Left cardiac atrium (tissue), 4 donors: ENCODE measurements at regions of chr13 and their contacts with region 1.

Region 1: GRCh38 chr13:49840266-49840665 is 47.8 kb upstream of the KPNA3 start:
- DNase-seq: no peak
- ATAC-seq: no peak

Region 2: DNA sequence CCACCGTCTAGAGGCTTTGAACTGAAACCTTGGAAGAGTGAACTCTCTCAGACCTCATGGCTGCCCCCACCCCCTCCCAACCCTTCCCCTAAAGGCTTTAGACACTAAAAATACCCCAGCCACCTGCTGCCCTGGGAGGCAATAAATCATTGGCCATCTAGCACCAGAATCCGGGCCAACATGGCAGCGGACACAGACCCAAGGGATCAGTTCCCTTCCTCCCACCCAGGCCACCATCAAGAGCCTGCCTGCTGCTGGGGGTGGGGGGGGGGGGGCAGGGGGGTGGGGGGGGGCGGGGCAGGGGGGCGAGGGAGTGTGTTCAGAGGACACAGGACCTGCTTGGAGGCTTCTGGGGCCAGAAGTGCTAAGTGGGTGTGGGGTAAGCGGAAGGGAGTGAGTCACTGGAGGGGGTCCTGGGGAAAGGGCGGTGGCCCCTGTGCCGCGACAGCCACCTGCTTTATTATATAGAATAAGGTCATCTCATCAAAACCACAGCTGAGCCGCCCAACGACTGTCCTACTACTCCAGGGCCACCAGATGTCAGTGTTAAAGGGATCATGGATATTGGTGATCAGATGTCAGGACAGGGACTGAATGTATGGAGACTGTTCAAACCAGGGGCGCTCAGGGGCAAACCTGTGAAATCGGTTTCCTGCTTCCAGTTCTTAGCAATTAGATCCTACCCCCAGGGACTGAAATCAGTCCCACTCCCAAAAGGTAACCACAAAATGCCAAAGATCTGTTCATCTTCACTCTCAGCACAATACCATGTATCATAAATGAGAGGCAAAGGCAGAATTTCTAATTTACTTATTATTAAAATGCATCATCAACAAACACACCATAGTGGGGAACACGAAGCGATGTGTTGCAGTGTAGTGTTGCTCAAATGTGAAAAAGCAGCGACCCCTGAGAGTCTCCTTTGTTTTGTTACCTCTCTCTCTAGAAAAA is 187.6 kb before region 1 on chr13:
- intact Hi-C with region 1: loop called (anchors 5 kb)
- DNase-seq: no peak
- ATAC-seq: peak in 1 of 2 donors; percentile 65

Region 3: DNA sequence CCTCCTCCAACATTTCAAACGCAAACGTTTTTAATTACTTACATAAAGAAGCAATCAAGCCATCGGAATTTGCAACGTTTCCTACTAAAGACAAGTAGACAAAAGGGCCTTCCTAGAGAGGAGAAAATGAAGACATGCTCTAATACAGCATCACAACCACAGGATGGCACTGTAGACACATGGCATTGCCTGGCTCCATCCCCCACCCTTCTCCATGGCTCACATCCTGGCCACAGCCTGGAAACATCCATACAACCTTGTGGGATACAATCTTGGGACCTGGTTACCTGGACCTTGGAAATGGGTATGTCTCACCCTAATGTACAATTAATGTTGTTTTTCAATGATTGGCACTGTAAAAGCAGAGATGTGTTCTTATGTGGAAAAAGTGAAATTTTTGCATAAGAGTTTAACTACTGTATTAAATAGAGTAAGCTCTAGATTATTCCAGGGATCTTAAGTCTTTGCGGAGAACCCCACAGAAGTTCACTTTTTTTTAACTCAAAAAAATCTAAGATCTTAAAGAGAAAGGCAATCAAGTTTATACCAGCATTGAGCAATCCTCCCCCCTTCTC is 170.4 kb before region 1 on chr13:
- intact Hi-C with region 1: loop called in 1 of 2 experiments (anchors 5 kb)
- DNase-seq: peak; percentile 41
- ATAC-seq: peak; percentile 88 to 95

Region 4: GRCh38 chr13:49792550-49793324 is 47.5 kb before region 1 on chr13 and contains the start of gene KPNA3:
- intact Hi-C with region 1: loop called in 1 of 2 experiments (anchors 5 kb)
- DNase-seq: peak; percentile 97
- ATAC-seq: peak; percentile 95 to 97
- total RNA-seq, gene KPNA3: 39.3 to 44.9 TPM